CD4-positive, alpha-beta T cell (primary cell): ENCODE measurements at regions of chr1 and their contacts with region 1.

Region 1: DNA sequence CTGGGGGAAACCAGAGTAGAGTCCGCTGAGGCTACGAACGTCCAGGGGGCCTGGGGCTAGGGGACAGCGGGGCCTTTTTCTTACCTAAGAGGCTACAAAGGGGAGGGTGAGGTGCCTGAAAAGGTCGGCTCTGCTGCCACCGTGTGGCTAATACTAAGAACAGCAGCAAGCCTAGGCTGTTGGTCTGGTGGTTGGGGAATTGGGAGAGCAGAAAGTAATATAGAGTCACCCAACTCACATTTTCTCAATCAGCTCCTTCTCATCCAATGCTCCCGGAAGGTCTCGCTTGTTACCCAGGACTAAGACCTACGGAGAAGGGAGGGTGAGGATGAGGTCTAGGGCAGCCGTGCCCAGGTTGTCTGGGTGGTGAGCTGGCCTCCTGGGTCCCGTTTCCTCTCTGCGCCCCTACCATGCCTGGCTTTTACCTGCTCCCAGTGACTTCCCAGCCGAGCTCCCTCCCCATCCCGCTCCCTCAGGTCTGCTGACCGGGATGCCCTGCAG is 9.3 kb downstream of the ARL8A start:
- DNase-seq: peak in 12 of 14 experiments; percentile 28 to 79 (median 42)
- ATAC-seq: peak; percentile 95
- H3K4me3 ChIP-seq: no peak overlapping the region
- H3K4me3 Mint-ChIP-seq: no peak overlapping the region
- H3K27ac ChIP-seq: no peak overlapping the region
- H3K27ac Mint-ChIP-seq: peak overlapping the region; percentile 1
- H3K4me1 ChIP-seq: peaks cover 15% of the 10 kb centered on the region
- H3K4me1 Mint-ChIP-seq: peaks cover 18% of the 10 kb centered on the region
- H3K27me3 ChIP-seq: no peaks in the 10 kb centered on the region
- H3K27me3 Mint-ChIP-seq: no peaks in the 10 kb centered on the region
- CTCF ChIP-seq: peak; percentile 80

Region 2: DNA sequence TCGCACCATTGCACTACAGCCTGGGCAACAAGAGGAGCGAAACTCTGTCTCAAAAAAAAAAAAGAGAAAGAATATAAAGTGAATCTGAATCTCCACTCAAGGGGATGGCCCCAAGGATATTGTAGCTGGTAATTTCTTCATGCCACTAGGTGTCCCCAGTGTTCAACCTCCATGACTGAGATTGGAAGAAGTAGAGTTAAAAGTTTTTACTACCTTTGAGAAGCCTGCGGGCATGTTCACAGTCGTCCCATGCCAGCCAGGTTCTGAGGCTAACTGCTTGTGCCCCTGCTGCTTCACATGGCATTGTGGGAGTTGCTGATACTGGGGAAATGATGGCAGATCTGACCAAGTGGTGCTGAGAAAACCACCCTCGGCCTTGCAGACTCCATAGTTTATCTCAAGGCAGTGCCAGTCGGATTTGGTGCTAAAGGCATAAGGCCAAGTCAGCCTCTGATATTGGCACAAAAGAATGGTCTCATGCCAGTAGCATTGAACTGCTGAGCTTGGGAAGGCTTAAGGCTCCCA is 257.3 kb before region 1 on chr1:
- CTCF ChIA-PET with region 1: no interaction called
- POLR2A ChIA-PET with region 1: no interaction called
- intact Hi-C with region 1: loop called in 1 of 2 experiments (anchors 5 kb)
- DNase-seq: peak in 3 of 14 experiments; percentile 15 to 50 (median 46)
- ATAC-seq: no peak
- H3K4me3 ChIP-seq: no peak overlapping the region
- H3K4me3 Mint-ChIP-seq: no peak overlapping the region
- H3K27ac ChIP-seq: no peak overlapping the region
- H3K27ac Mint-ChIP-seq: peak overlapping the region; percentile 27
- H3K4me1 ChIP-seq: no peaks in the 10 kb centered on the region
- H3K4me1 Mint-ChIP-seq: no peaks in the 10 kb centered on the region
- H3K27me3 ChIP-seq: no peaks in the 10 kb centered on the region
- H3K27me3 Mint-ChIP-seq: no peaks in the 10 kb centered on the region
- CTCF ChIP-seq: peak; percentile 63

Region 3: GRCh38 chr1:202009326-202010179 is 125.7 kb before region 1 on chr1:
- CTCF ChIA-PET with region 1: no interaction called
- POLR2A ChIA-PET with region 1: no interaction called
- intact Hi-C with region 1: loop called in 1 of 2 experiments (anchors 1 kb)
- DNase-seq: peak; percentile 24 to 75 (median 48)
- ATAC-seq: peak; percentile 68
- H3K4me3 ChIP-seq: no peak overlapping the region
- H3K4me3 Mint-ChIP-seq: no peak overlapping the region
- H3K27ac ChIP-seq: no peak overlapping the region
- H3K27ac Mint-ChIP-seq: no peak overlapping the region
- H3K4me1 ChIP-seq: peaks cover 3% of the 10 kb centered on the region
- H3K4me1 Mint-ChIP-seq: no peaks in the 10 kb centered on the region
- H3K27me3 ChIP-seq: no peaks in the 10 kb centered on the region
- H3K27me3 Mint-ChIP-seq: no peaks in the 10 kb centered on the region
- CTCF ChIP-seq: peak; percentile 93